ENCODE measurements at regions of chr1 and their contacts with region 1.

Region 1: DNA sequence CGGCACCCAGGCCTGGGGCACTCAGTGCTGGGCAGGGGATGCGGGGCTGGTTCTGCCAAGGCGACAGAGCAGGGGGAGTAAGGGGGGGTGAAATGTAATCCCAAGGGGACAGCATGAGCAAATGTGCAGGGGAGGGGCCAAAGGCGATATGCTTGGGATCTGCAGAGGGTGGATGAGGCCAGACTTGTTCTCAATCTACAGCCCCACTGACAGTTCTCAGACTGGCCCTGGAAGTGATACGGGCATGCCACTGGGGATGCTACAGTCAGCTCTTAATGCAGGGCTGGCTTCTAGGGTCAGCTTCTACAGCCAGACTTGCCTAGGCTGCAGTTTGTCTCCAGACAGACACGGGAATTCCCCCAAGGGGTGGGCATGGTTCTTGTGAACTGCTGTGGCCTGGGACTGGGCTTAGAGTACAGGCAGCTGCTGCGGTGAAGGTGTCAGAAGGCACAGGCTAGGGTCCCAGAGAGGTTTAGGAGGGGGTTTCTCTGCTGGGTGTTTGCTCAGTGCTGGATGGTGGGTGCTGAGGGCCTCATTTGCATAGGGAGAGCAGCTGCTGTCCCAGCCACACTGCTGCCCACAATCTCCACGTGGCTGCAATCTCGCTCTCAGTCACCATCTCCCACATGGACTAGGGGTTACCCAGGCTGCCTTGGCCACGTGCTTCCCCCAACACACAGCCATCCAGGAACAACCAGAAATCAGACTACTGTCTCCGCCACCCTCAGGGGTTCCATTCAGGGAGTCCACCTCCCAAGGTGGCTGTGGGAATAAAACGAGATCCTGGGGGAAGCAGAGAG is 190.1 kb downstream of the HIVEP3 start:
- DNase-seq: peak; percentile 100
- ATAC-seq: peak; percentile 87
- H3K4me3 ChIP-seq: no peak overlapping the region
- H3K27ac ChIP-seq: peak overlapping the region; percentile 93
- H3K4me1 ChIP-seq: peaks cover 56% of the 10 kb centered on the region
- H3K27me3 ChIP-seq: no peaks in the 10 kb centered on the region
- CTCF ChIP-seq: no peak
- EP300 ChIP-seq: peak; percentile 97
- POLR2A ChIP-seq: no peak
- RAD21 ChIP-seq: peak; percentile 23; the same call in 1 of the 2 replicates

Region 2: DNA sequence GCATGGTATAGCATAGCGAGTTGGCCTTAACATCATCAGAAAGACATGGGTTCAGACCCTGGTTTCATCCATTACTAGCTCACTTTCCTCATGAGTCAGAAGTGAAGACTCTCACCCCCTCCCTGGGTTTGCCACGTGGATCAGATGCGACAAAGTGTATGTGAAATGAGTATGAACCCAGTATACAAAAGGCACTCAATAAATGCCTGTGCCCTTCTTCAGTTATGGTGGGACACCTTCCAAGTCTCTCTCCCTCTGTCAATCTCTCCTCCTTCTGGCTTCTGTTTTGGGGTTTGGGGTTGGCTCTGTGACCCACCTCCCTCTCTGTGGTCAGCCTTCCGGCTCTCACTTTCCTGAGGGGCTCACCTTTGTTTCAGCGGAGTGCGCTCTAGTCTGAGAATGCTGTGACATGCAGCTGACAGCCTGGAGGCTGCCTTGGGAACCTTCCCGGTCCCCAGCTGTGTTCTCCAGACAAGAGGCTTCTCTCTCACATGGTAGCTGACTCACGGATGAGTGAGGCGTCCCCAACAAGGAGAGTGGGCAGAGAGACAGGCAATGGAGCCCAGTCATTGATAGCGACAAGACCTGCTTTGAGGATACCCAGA is 89.2 kb before region 1 on chr1:
- CTCF ChIA-PET with region 1: no interaction called
- POLR2A ChIA-PET with region 1: interaction called, 5 read pairs
- RAD21 ChIA-PET with region 1: interaction called, 12 read pairs
- SMC1A ChIA-PET with region 1: interaction called, 4 read pairs
- in situ Hi-C with region 1: no loop called
- intact Hi-C with region 1: no loop called
- DNase-seq: no peak
- ATAC-seq: peak; percentile 66
- H3K4me3 ChIP-seq: no peak overlapping the region
- H3K27ac ChIP-seq: peak overlapping the region; percentile 54
- H3K4me1 ChIP-seq: peaks cover 43% of the 10 kb centered on the region
- H3K27me3 ChIP-seq: no peaks in the 10 kb centered on the region
- CTCF ChIP-seq: no peak
- EP300 ChIP-seq: no peak
- POLR2A ChIP-seq: no peak
- RAD21 ChIP-seq: no peak

Region 3: GRCh38 chr1:41683681-41684500 is 44.7 kb before region 1 on chr1:
- CTCF ChIA-PET with region 1: no interaction called
- POLR2A ChIA-PET with region 1: interaction called, 4 read pairs
- RAD21 ChIA-PET with region 1: interaction called, 10 read pairs
- SMC1A ChIA-PET with region 1: interaction called, 13 read pairs
- in situ Hi-C with region 1: no loop called
- intact Hi-C with region 1: loop called (anchors 5 kb)
- DNase-seq: no peak
- ATAC-seq: no peak; the same call in 1 of the 3 replicates
- H3K4me3 ChIP-seq: no peak overlapping the region
- H3K27ac ChIP-seq: peak overlapping the region; percentile 51
- H3K4me1 ChIP-seq: peaks cover 50% of the 10 kb centered on the region
- H3K27me3 ChIP-seq: no peaks in the 10 kb centered on the region
- CTCF ChIP-seq: no peak
- EP300 ChIP-seq: no peak
- POLR2A ChIP-seq: no peak
- RAD21 ChIP-seq: no peak

Region 4: GRCh38 chr1:41739061-41739955 is 10.7 kb after region 1 on chr1:
- CTCF ChIA-PET with region 1: interaction called, 26 read pairs
- POLR2A ChIA-PET with region 1: interaction called, 67 read pairs
- RAD21 ChIA-PET with region 1: interaction called, 77 read pairs
- SMC1A ChIA-PET with region 1: interaction called, 93 read pairs
- in situ Hi-C with region 1: no loop called
- intact Hi-C with region 1: loop called (anchors 1 kb)
- DNase-seq: peak; percentile 66
- ATAC-seq: peak; percentile 87
- H3K4me3 ChIP-seq: peak overlapping the region; percentile 41; the same call in 1 of the 2 replicates
- H3K27ac ChIP-seq: peak overlapping the region; percentile 94
- H3K4me1 ChIP-seq: peaks cover 54% of the 10 kb centered on the region
- H3K27me3 ChIP-seq: no peaks in the 10 kb centered on the region
- CTCF ChIP-seq: no peak
- EP300 ChIP-seq: peak; percentile 53 to 70; a peak in 1 of 4 replicates
- POLR2A ChIP-seq: peak; percentile 57
- RAD21 ChIP-seq: no peak

Region 5: DNA sequence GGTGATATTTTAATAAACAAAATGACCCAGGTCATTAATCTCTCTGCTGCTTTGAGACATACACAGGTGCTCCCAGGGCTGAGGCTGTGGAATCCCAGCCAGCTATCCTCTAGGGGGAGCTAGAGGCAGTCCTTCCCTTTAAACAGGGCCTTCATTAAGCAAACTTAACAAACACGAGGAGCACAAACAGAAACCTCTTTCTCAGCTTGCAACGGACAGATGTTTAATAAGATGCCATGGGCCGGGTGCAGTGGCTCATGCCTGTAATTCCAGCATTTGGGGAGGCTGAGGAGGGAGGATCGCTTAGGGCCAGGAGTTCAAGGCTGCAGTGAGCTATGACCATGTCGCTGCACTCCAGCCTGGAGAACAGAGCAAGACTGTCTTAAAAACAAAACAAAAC is 83.4 kb after region 1 on chr1:
- CTCF ChIA-PET with region 1: interaction called, 6 read pairs
- POLR2A ChIA-PET with region 1: interaction called, 3 read pairs
- RAD21 ChIA-PET with region 1: interaction called, 61 read pairs
- SMC1A ChIA-PET with region 1: interaction called, 4 read pairs
- in situ Hi-C with region 1: no loop called
- intact Hi-C with region 1: loop called (anchors 2 kb)
- DNase-seq: no peak
- ATAC-seq: peak; percentile 70
- H3K4me3 ChIP-seq: no peak overlapping the region
- H3K27ac ChIP-seq: no peak overlapping the region
- H3K4me1 ChIP-seq: peaks cover 43% of the 10 kb centered on the region
- H3K27me3 ChIP-seq: no peaks in the 10 kb centered on the region
- CTCF ChIP-seq: peak; percentile 67 to 72 (median 70)
- EP300 ChIP-seq: no peak
- POLR2A ChIP-seq: no peak
- RAD21 ChIP-seq: peak; percentile 77

Region 6: GRCh38 chr1:41955461-41956159 is 227.0 kb after region 1 on chr1:
- CTCF ChIA-PET with region 1: interaction called, 4 read pairs
- POLR2A ChIA-PET with region 1: no interaction called
- RAD21 ChIA-PET with region 1: interaction called, 3 read pairs
- SMC1A ChIA-PET with region 1: interaction called, 5 read pairs
- in situ Hi-C with region 1: no loop called
- intact Hi-C with region 1: loop called (anchors 10 kb)
- DNase-seq: peak; percentile 87
- ATAC-seq: peak; percentile 92
- H3K4me3 ChIP-seq: no peak overlapping the region; the same call in 1 of the 2 replicates
- H3K27ac ChIP-seq: peak overlapping the region; percentile 67
- H3K4me1 ChIP-seq: peaks cover 26% of the 10 kb centered on the region
- H3K27me3 ChIP-seq: no peaks in the 10 kb centered on the region
- CTCF ChIP-seq: no peak
- EP300 ChIP-seq: peak; percentile 43 to 81; a peak in 3 of 4 replicates
- POLR2A ChIP-seq: no peak
- RAD21 ChIP-seq: no peak

Measured in GM12878 (cell line).